Breast epithelium (tissue), 4 donors: ENCODE measurements at regions of chr16 and their contacts with region 1.

Region 1: DNA sequence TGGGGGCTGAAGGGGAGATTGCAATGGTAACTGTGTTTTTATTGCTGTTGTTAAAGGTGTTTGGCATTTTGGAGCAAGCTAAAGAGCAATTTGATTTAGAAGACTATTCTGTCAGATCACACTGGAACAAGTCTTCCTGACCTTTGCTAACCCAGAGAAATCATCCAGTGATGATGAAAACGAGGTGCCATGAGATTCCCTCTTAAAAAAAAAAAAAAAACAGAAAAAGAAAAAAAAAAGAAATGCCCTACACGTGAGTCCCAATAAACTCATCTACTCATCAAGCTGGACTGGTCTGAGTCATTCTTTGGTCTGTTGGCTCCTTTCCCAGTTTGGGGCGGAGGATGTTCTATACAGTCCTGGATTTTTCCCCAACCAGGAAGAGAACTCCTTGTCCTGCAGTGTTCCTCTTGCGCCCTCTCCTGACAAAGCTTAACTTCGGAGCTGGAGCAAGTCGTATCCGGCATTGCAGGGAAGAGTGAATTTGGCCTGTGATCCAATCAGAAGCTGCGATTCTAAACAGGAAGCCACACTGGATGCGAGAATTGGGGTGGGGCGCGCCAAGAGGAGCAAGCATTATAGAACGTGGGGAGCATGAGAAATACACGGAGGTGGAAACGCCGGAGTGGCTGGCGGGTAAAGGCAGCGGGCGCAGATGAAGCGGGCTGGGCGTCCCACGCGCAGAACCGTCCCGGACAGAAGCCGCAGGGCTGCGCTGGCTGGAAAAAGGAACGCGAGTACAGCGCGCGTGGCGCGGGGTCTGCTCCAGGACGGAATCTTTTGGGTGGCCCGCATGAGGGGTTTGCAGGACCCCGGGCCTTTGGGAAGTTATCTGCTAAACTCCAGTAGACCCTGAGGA is 22.4 kb upstream of the CRYM start:
- DNase-seq: peak; percentile 92 to 98
- H3K4me3 ChIP-seq: peak overlapping the region; percentile 65 to 87 (median 76)
- H3K27ac ChIP-seq: peak overlapping the region; percentile 74 to 86
- H3K4me1 ChIP-seq: no peaks in the 10 kb centered on the region
- H3K27me3 ChIP-seq: no peaks in the 10 kb centered on the region
- CTCF ChIP-seq: peak; percentile 64 to 94 (median 91)
- POLR2A ChIP-seq: no peak

Region 2: DNA sequence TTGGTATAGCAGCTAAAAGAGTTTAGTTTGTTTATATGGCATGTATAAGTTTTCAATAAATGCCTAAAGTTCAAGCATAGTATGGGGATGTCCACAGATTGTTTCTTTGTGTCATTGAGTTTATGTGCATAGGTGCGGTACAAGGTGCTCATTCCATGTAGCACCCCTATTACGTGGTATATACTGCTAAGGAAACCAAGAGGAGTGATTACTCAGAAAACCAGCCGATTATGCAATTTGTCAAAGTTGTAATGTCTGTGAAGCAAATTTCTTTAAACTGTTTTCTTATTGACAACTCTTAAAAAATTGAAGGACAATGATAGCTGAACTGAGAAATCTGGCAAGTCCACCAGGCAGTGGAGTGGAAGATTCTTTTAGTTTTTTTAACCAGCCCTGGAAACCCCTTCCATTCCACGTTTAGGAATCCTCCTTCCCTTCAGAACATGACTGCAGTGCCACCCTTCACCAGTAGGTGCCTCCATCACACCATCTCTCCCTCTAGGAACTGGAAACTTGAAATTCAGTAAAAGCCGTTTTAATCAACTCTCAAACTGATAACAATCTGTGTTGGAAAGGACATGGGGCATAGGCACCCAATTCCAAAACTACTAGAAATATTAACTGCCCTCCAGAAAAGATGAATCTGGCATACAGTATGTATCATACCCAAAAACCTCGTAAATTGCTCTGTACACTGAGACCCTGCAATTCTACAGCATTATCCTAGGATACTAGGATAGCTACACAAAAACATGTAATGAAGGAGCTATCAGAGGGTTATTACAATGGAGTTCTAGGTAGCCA is 450.7 kb before region 1 on chr16:
- intact Hi-C with region 1: loop called (anchors 5 kb)
- DNase-seq: peak; percentile 57 to 71
- H3K4me3 ChIP-seq: no peak overlapping the region
- H3K27ac ChIP-seq: peak overlapping the region; percentile 67 to 81
- H3K4me1 ChIP-seq: peaks cover 4 to 6% of the 10 kb centered on the region in 2 donors
- H3K27me3 ChIP-seq: no peaks in the 10 kb centered on the region
- CTCF ChIP-seq: peak; percentile 94 to 96 (median 96)
- POLR2A ChIP-seq: no peak

Region 3: GRCh38 chr16:21277927-21278706 is 22.4 kb before region 1 on chr16 and contains the start of gene CRYM:
- intact Hi-C with region 1: no loop called
- DNase-seq: peak in 1 of 2 donors; percentile 32
- H3K4me3 ChIP-seq: peak within 1 kb of the TSS; percentile 35 to 64 (median 54)
- H3K27ac ChIP-seq: no peak within 1 kb of the TSS
- H3K4me1 ChIP-seq: no peaks in the 10 kb centered on the region
- H3K27me3 ChIP-seq: peaks cover 0 to 14% of the 10 kb centered on the region in 2 donors
- CTCF ChIP-seq: peak in 2 of 3 donors; percentile 47 to 71
- POLR2A ChIP-seq: no peak
- total RNA-seq, gene CRYM: 0.98 to 5.0 (median 2.6) TPM

Region 4: GRCh38 chr16:21321736-21322135 is 21.2 kb after region 1 on chr16:
- intact Hi-C with region 1: no loop called
- DNase-seq: no peak
- H3K4me3 ChIP-seq: no peak overlapping the region
- H3K27ac ChIP-seq: no peak overlapping the region
- H3K4me1 ChIP-seq: no peaks in the 10 kb centered on the region
- H3K27me3 ChIP-seq: no peaks in the 10 kb centered on the region
- CTCF ChIP-seq: no peak
- POLR2A ChIP-seq: no peak

Region 5: DNA sequence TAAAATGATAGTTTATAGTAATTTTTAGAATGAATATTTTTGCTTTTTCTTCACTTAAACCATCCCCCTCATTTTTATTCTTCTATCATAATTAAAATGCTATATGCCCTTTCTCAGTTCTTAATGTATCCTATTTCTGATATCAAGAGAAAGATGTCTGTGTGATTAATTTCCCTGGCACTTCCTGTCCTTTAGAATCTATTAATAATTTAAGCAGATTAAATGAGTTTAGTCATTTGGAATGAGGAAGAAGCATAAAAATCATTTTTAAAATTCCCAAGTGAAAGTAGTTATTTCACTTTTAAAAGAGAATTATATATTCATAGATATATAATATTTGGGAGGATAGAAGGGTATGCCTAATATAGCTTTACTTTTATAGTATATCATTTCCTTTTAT is 1101.7 kb after region 1 on chr16:
- intact Hi-C with region 1: loop called (anchors 10 kb)
- DNase-seq: no peak
- H3K4me3 ChIP-seq: no peak overlapping the region
- H3K27ac ChIP-seq: no peak overlapping the region
- H3K4me1 ChIP-seq: no peaks in the 10 kb centered on the region
- H3K27me3 ChIP-seq: no peaks in the 10 kb centered on the region
- CTCF ChIP-seq: no peak
- POLR2A ChIP-seq: no peak

Region 6: DNA sequence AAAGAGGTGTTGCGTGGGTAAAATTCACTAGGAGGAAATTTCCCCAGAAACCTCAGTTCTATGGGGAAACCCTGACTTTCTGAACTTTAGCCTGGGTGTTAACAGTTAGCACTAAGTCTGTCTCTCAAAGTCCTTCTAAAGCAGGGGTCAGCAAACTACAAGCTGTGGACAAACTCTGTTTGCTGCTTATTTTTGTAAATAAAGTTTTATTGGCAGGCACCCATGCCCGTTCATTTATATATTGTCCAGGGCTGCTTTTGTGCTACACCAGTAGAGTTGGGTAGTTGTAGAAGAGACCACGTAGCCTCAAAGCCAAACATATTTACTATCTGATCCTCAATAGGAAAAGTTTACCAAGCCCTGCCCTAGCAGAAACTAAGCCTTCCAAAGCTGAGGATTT is 1689.1 kb after region 1 on chr16:
- intact Hi-C with region 1: no loop called
- DNase-seq: no peak
- H3K4me3 ChIP-seq: no peak overlapping the region
- H3K27ac ChIP-seq: no peak overlapping the region
- H3K4me1 ChIP-seq: no peaks in the 10 kb centered on the region
- H3K27me3 ChIP-seq: no peaks in the 10 kb centered on the region
- CTCF ChIP-seq: no peak
- POLR2A ChIP-seq: no peak